Activated naive CD4-positive, alpha-beta T cell treated with anti-CD3 and anti-CD28 coated beads for 36 hours (primary cell): ENCODE measurements at regions of chr17 and their contacts with region 1.

Region 1: GRCh38 chr17:59155439-59156182 is at the start of gene PRR11:
- DNase-seq: peak; percentile 97
- H3K4me3 Mint-ChIP-seq: no peak within 1 kb of the TSS
- H3K27ac Mint-ChIP-seq: no peak within 1 kb of the TSS
- H3K4me1 Mint-ChIP-seq: peaks cover 25% of the 10 kb centered on the region
- H3K27me3 Mint-ChIP-seq: no peaks in the 10 kb centered on the region
- total RNA-seq, gene PRR11: 77.4 to 82.1 TPM

Region 2: DNA sequence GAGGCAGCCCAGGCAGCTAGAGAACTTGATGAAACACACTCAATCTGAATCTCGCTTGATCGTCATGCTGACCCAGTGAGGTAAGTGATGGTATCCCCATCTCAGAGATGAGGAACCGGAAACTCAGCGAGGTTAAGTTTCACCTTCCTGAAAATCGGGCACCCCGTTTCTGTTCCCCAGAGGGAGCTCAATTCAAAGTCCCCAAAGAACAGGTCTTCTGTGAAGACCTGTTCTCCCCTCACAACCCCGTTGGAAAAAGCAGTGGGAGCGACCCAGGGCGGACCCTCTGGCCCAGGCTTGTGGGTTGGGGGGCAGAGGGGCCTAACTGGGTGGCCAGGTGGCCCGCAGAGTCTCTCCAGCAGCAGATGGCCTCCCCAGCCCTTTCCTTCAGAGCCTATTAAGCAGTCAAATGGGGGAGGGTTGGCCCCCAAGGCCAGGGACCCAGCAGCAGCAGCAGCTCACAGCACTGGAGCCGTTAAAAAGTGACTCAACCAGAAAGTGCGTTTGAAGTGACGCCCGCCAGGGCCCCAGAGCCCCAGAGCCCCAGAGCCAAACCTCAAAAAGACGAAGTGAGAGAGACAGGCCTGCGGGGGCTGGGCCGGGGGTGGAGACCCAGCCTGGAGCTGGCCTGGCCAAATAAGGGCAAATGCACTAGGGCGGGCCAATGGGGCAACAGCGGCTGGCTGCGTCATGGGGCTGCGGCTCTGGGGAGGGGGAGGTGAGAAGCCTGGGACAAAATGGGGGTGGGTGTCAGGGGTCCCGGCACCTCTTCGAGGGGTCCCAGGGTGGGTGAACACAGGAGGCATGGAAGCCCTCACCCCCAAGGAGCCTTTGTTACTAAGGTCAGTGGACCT is 817.8 kb before region 1 on chr17:
- CTCF ChIA-PET with region 1: no interaction called
- intact Hi-C with region 1: loop called (anchors 5 kb)
- DNase-seq: peak; percentile 98
- H3K4me3 Mint-ChIP-seq: peak overlapping the region; percentile 92
- H3K27ac Mint-ChIP-seq: peak overlapping the region; percentile 99
- H3K4me1 Mint-ChIP-seq: peaks cover 7% of the 10 kb centered on the region
- H3K27me3 Mint-ChIP-seq: no peaks in the 10 kb centered on the region

Region 3: DNA sequence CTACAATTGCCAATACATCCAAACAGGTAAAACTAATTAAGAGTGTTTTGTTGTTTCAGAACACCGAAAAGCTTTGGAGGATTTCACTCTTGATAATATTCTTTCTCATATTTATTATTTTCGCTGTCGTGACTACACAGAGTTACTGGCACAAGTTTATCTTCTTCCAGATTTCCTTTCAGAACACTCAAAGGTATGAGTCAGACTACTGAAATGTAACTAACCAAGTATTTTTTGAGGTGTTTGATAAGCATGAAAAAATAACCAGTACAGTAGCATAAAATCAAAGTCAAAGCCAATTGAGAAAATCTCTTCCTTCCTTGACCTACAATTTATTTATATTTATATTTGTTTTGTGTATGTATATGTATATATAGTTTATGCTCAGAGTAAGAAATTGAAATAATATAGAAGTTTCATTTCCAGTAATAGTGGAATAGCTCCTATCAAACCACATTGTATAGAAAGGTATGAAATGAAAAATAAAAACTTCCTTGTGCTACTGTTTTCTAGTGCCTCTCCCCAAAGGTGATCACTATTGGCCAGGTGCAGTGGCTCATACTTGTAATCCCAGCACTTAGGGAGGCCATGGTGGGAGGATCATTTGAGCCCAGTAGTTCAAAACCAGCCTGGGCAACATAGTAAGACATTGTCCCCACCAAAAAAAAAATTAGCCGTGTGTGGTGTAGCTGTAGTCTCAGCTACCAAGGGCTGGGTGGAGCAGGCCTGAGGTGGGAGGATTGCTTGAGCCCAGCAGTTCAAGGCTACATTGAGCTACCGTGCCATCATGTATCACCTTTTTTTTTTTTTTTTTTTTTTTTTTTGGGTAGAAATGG is 452.3 kb before region 1 on chr17:
- CTCF ChIA-PET with region 1: no interaction called
- intact Hi-C with region 1: loop called (anchors 5 kb)
- DNase-seq: peak; percentile 26
- H3K4me3 Mint-ChIP-seq: no peak overlapping the region
- H3K27ac Mint-ChIP-seq: peak overlapping the region; percentile 71
- H3K4me1 Mint-ChIP-seq: peaks cover 30% of the 10 kb centered on the region
- H3K27me3 Mint-ChIP-seq: no peaks in the 10 kb centered on the region

Region 4: GRCh38 chr17:59199398-59199797 is 43.8 kb after region 1 on chr17:
- CTCF ChIA-PET with region 1: no interaction called
- intact Hi-C with region 1: no loop called
- DNase-seq: no peak
- H3K4me3 Mint-ChIP-seq: no peak overlapping the region
- H3K27ac Mint-ChIP-seq: no peak overlapping the region
- H3K4me1 Mint-ChIP-seq: no peaks in the 10 kb centered on the region
- H3K27me3 Mint-ChIP-seq: no peaks in the 10 kb centered on the region

Region 5: DNA sequence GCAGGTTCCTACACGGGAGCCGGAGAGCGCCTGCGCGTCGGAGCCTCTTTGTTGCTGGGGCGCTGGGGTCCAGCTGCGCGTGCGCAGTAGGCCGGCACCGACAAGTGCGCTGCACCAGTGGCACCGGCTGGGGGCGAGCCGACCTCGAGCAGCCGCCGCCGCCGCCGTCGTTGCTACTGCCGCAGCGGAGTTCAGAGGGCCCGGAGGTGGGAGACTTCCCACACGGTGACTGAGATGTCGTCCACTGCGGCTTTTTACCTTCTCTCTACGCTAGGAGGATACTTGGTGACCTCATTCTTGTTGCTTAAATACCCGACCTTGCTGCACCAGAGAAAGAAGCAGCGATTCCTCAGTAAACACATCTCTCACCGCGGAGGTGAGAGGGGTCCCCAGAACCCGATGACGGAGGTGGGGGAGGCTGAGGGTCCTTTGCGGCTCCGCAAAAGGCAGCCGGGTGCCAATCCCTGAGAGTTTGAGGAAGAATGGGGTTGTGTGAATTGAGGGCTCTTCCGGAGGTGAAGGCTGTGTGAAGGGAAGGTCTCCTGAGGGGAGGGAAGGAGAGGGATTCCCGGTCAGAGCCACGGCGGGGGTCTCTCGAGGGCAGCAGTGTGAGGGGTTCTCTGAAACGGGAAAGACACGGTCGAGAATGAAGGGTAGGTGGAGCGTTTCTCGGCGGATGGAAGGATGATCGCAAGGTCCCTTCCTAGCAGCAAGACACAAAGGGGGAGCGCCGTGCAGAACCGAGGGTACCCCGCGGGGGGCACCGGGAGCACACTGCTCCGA is 65.0 kb after region 1 on chr17 and contains the start of gene GDPD1:
- CTCF ChIA-PET with region 1: no interaction called
- intact Hi-C with region 1: loop called (anchors 1 kb)
- DNase-seq: peak; percentile 97
- H3K4me3 Mint-ChIP-seq: peak within 1 kb of the TSS; percentile 93
- H3K27ac Mint-ChIP-seq: peak within 1 kb of the TSS; percentile 56
- H3K4me1 Mint-ChIP-seq: peaks cover 13% of the 10 kb centered on the region
- H3K27me3 Mint-ChIP-seq: no peaks in the 10 kb centered on the region
- total RNA-seq, gene GDPD1: 2.2 TPM

Region 6: GRCh38 chr17:59513934-59514841 is 358.6 kb after region 1 on chr17:
- CTCF ChIA-PET with region 1: no interaction called
- intact Hi-C with region 1: no loop called
- DNase-seq: no peak
- H3K4me3 Mint-ChIP-seq: no peak overlapping the region
- H3K27ac Mint-ChIP-seq: no peak overlapping the region
- H3K4me1 Mint-ChIP-seq: no peaks in the 10 kb centered on the region
- H3K27me3 Mint-ChIP-seq: no peaks in the 10 kb centered on the region

Region 7: GRCh38 chr17:59892924-59893676 is 737.5 kb after region 1 on chr17 and contains the starts of genes RPS6KB1 and TUBD1:
- CTCF ChIA-PET with region 1: no interaction called
- intact Hi-C with region 1: loop called (anchors 5 kb)
- DNase-seq: peak; percentile 99
- H3K4me3 Mint-ChIP-seq: peak within 1 kb of the TSS; percentile 100
- H3K27ac Mint-ChIP-seq: peak within 1 kb of the TSS; percentile 96
- H3K4me1 Mint-ChIP-seq: peaks cover 58% of the 10 kb centered on the region
- H3K27me3 Mint-ChIP-seq: no peaks in the 10 kb centered on the region
- total RNA-seq, gene RPS6KB1: 42.1 to 48.5 TPM
- total RNA-seq, gene TUBD1: 15.2 to 15.4 TPM

Region 8: GRCh38 chr17:60599620-60600489 is 1444.2 kb after region 1 on chr17 and contains the start of gene PPM1D:
- CTCF ChIA-PET with region 1: no interaction called
- intact Hi-C with region 1: loop called (anchors 1 kb)
- DNase-seq: peak; percentile 99
- H3K4me3 Mint-ChIP-seq: peak within 1 kb of the TSS; percentile 93
- H3K27ac Mint-ChIP-seq: peak within 1 kb of the TSS; percentile 95
- H3K4me1 Mint-ChIP-seq: peaks cover 30% of the 10 kb centered on the region
- H3K27me3 Mint-ChIP-seq: no peaks in the 10 kb centered on the region
- total RNA-seq, gene PPM1D: 11.8 to 13.1 TPM